ENCODE measurements at regions of chr14 and their contacts with region 1.

Region 1: GRCh38 chr14:76710056-76711010 is 50.9 kb upstream of the VASH1 start:
- DNase-seq: peak in 1 of 10 donors; percentile 36

Region 2: DNA sequence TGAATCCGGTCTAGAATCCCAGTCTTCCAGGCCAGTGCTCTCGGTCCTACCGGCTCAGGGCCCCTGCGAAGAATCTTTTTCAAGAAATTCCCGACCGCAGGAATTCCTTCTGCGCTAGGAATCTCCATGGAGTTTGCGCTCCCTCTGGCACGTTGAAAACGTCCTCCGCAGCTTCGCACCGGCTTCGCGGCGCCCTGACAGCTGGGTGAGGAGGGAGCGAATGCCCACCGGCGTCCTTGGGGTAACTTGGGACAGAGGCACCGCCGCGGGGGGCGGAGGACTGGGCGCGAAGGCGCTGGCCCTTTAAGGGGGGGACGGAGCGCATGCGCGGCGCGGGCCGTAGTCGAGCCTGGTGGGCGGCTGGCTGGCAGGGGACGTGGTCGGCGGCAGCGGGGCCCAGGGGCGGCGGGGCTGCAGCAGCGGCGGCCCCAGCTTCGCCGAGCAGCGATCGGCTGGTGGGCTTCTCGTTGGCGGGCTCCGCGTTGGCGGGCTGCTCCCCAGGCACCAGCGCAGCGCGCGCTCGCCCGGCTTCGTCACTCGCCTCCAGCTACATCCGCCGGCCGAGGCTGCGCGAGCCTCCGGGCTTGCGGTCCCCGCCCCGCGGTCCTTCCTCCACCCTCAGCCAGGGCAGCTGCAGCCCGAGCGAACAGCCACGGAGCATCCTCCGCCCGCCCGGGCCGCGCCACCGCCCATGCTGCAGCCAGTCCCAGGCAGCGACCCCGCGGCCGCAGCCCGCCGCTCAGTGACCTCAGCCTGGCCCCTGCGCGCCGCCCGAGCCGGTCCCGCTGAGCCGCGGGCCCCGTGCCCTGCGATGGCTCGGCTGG is 51.0 kb after region 1 on chr14 and contains the start of gene VASH1:
- intact Hi-C with region 1: loop called (anchors 2 kb)
- DNase-seq: peak; percentile 66 to 97 (median 78)

Region 3: DNA sequence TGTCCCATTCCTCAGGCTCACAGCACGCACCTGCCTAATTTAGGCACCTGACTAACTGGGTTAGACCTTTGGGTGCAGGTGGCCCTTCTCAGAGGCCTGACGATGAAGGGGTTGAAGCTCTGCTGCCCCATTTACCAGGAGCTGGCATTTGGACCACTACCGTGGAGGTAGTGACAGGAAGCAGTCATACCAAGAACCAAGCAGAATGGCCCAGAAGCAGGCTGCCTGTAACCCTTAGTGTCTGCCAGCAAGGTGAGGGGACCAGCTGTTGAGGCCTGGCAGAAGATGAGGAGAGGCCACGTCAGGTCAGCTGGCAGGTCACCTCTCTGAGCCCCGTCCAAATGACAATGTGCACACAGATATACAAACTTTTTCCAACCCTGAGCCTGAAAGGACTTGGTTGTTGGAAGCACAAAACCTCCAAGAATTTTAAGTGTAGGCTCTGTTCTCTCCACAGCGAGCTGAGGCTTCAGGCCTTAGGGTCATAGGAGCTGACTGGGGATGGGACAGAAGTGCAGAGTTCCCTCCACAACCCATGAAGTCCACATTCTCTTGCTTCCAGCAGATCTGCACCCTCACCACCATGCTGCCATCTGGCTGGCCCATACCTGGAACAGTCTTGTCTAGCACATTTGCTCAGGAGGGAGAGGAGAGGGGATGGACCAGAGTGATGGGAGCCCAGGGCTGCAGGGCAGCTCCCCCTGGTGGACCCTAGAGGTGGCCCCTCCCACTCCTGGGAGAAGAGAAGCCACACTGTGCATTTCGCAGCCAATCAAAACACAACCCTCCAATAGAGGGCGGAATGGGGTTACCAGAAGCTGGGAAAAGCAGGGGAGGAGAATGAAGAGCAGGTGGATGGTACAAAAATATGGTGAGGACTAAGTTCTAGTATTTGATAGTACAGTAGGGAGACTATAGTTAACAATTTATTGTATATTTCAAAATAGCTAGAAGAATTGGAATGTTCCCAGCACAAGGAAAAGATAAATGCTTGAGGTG is 74.2 kb after region 1 on chr14:
- intact Hi-C with region 1: loop called (anchors 1 kb)
- DNase-seq: peak in 8 of 10 donors; percentile 76 to 97 (median 84)

Region 4: DNA sequence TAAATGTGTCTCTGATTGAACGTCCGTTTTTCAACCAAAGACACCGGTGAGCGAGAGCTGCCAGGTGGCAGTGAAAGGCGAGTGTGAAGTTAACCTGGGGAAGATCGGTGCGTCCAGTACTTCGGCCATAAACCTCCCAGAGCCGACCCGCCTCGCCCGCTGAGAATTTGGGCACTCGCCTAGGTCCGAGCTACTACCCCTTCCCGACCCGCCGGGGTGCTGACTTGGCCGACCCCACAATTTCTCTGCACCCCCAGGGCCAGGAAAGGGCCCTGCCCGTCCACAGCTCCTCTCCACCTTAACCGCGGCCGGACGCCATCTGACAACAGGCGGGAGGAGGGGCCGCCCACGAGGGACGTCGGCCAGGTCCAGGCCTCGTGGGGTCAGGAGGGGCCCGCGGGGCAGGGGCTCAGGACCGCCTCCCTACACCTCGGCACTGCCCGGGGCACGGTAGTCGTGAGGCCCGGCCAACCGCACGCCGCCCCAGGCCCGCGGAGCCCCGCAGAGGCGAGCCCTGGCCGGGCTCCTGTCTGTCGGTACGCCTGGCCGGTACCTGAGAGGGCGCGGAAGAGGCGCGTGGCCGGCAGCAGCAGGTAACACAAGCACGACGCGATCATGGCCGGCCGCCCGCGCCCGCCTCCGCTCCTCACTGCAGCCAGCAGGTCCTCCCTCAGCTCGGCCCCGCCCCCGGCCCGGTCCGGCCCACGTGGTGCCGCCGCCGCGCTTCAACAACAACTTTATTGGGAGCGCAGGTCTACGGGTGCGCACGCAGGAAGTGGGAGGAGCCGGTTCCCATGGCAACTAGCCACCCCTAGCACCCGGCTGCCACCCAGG is 102.1 kb after region 1 on chr14 and contains the start of gene ANGEL1:
- intact Hi-C with region 1: loop called (anchors 1 kb)
- DNase-seq: peak; percentile 90 to 99 (median 92)

Measured in posterior cingulate gyrus (tissue), 11 donors.